ENCODE measurements at regions of chr10 and their contacts with region 1.

Region 1: GRCh38 chr10:4813023-4813422 is 13.0 kb upstream of the AKR1E2 start:
- DNase-seq: no peak
- H3K4me3 ChIP-seq: no peak overlapping the region
- H3K27ac ChIP-seq: no peak overlapping the region
- H3K4me1 ChIP-seq: no peaks in the 10 kb centered on the region
- H3K27me3 ChIP-seq: no peaks in the 10 kb centered on the region
- CTCF ChIP-seq: no peak

Region 2: GRCh38 chr10:5283305-5284158 is 470.5 kb after region 1 on chr10:
- intact Hi-C with region 1: loop called (anchors 1 kb)
- DNase-seq: peak in 1 of 2 donors; percentile 75
- H3K4me3 ChIP-seq: no peak overlapping the region
- H3K27ac ChIP-seq: no peak overlapping the region
- H3K4me1 ChIP-seq: no peaks in the 10 kb centered on the region
- H3K27me3 ChIP-seq: no peaks in the 10 kb centered on the region
- CTCF ChIP-seq: peak; percentile 53 to 65 (median 60)

Region 3: GRCh38 chr10:5623081-5623748 is 810.2 kb after region 1 on chr10:
- intact Hi-C with region 1: loop called (anchors 10 kb)
- DNase-seq: peak in 1 of 2 donors; percentile 93
- H3K4me3 ChIP-seq: no peak overlapping the region
- H3K27ac ChIP-seq: peak overlapping the region; percentile 52 to 65
- H3K4me1 ChIP-seq: peaks cover 12 to 51% of the 10 kb centered on the region in 2 donors
- H3K27me3 ChIP-seq: no peaks in the 10 kb centered on the region
- CTCF ChIP-seq: peak; percentile 91 to 93 (median 92)

Measured in ascending aorta (tissue), 2 donors.